Naive thymus-derived CD4-positive, alpha-beta T cell (primary cell): ENCODE measurements at regions of chr14 and their contacts with region 1.

Region 1: DNA sequence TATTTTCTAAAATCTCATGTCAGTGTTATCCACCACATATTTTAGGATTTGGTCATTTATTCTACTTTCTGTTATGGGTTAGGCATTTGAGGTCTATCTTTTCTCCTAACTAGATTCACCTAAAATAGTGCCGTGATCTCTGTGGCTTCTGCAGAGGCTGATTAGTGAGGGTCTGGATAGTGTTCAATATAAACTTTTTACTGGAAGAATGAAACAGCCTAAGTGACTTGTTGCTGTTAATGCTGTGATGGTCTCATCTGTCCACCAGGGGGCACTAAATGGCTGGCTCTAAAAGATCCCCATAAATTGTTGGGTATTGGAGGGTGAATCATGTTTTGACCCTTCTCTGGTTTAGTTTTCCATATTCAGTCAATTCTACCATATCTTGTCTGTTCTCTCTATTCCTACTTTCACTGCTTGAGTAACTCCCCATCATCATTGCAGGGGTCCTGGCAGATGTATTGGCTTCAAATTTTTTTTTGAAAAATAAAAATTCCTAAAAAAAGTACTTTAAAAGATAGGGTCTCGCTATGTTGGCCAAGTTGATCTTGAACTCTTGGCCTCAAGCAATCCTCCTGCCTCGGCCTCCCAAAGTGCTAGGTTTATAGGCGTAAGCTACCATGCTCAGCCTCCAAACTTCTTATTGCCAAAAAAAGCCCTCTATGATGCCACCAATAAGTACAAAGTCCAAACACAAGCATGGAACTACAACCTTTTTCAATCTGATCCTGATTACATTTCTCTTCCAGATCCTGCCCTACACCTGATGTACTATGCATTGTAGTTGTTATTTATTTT is 6.9 kb downstream of the PABPN1 start:
- DNase-seq: peak in 8 of 9 donors; percentile 49 to 69 (median 59)
- ATAC-seq: peak; percentile 86
- H3K4me3 ChIP-seq: no peak overlapping the region
- H3K4me3 Mint-ChIP-seq: no peak overlapping the region
- H3K27ac ChIP-seq: no peak overlapping the region
- H3K27ac Mint-ChIP-seq: peak overlapping the region in 3 of 9 donors; percentile 6 to 34 (median 23)
- H3K4me1 ChIP-seq: peaks cover 0 to under 1% of the 10 kb centered on the region in 2 donors
- H3K4me1 Mint-ChIP-seq: peaks cover 3 to 11% (median 8%) of the 10 kb centered on the region in 7 donors
- H3K27me3 ChIP-seq: no peaks in the 10 kb centered on the region
- H3K27me3 Mint-ChIP-seq: peaks cover 0 to 6% (median 0%) of the 10 kb centered on the region in 5 donors

Region 2: DNA sequence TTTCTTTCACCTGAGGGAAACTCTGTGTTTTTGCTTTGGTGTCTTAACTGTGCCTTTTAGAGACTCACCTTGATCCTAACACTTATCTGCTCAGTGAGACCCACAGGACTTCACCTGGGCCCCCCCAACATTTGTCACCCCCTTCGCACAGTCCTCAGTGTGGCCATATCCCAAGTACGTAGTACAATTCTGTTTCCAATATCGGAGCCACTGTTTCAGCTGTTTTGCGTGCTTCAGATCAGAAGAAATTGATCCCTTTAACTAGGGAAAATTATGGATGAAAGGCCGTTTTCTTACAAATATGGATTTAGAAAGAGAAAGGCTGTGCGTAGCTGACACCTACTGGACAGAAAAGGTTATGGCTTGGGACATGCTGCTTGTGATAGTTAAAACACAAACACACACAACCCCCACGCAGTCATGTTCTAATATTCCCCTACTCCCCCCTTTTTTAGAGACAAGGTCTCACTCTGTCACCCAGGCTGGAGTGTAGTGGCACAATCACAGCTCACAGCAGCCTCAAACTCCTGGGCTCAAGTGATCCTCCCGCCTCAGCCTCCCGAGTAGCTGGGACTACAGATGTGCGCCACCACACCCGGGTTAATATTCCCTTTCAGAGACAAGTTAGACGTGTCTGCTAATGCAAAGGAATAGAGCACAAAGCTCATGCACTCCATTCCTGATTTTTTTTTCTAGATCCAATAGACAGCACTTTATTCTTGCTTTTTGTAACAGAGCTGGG is 141.1 kb before region 1 on chr14:
- CTCF ChIA-PET with region 1: no interaction called
- POLR2A ChIA-PET with region 1: no interaction called
- intact Hi-C with region 1: no loop called
- DNase-seq: peak in 7 of 9 donors; percentile 25 to 55 (median 36)
- ATAC-seq: peak; percentile 73
- H3K4me3 ChIP-seq: no peak overlapping the region
- H3K4me3 Mint-ChIP-seq: no peak overlapping the region
- H3K27ac ChIP-seq: no peak overlapping the region
- H3K27ac Mint-ChIP-seq: peak overlapping the region in 3 of 9 donors; percentile 12 to 65 (median 26)
- H3K4me1 ChIP-seq: peaks cover 3 to 4% of the 10 kb centered on the region in 2 donors
- H3K4me1 Mint-ChIP-seq: peaks cover 0 to 11% (median 2%) of the 10 kb centered on the region in 7 donors
- H3K27me3 ChIP-seq: no peaks in the 10 kb centered on the region
- H3K27me3 Mint-ChIP-seq: peaks cover 0 to 19% (median 0%) of the 10 kb centered on the region in 5 donors

Region 3: GRCh38 chr14:23269193-23269592 is 59.0 kb before region 1 on chr14:
- CTCF ChIA-PET with region 1: interaction called, 7 read pairs
- POLR2A ChIA-PET with region 1: no interaction called
- intact Hi-C with region 1: loop called (anchors 1 to 2 kb)
- DNase-seq: no peak
- ATAC-seq: no peak
- H3K4me3 ChIP-seq: no peak overlapping the region
- H3K4me3 Mint-ChIP-seq: no peak overlapping the region
- H3K27ac ChIP-seq: no peak overlapping the region
- H3K27ac Mint-ChIP-seq: no peak overlapping the region
- H3K4me1 ChIP-seq: no peaks in the 10 kb centered on the region
- H3K4me1 Mint-ChIP-seq: no peaks in the 10 kb centered on the region
- H3K27me3 ChIP-seq: peaks cover 0 to 4% of the 10 kb centered on the region in 2 donors
- H3K27me3 Mint-ChIP-seq: peaks cover 0 to 18% (median 12%) of the 10 kb centered on the region in 5 donors

Region 4: GRCh38 chr14:23352511-23353432 is 24.6 kb after region 1 on chr14 and contains the start of gene SLC22A17:
- CTCF ChIA-PET with region 1: no interaction called
- POLR2A ChIA-PET with region 1: interaction called, 3 read pairs
- intact Hi-C with region 1: loop called in 1 of 2 experiments (anchors 1 kb)
- DNase-seq: peak; percentile 42 to 80 (median 67)
- ATAC-seq: peak; percentile 93
- H3K4me3 ChIP-seq: peak within 1 kb of the TSS; percentile 54
- H3K4me3 Mint-ChIP-seq: peak within 1 kb of the TSS; percentile 78 to 92 (median 88)
- H3K27ac ChIP-seq: peak within 1 kb of the TSS; percentile 58
- H3K27ac Mint-ChIP-seq: peak within 1 kb of the TSS in 8 of 9 donors; percentile 5 to 93 (median 77)
- H3K4me1 ChIP-seq: no peaks in the 10 kb centered on the region
- H3K4me1 Mint-ChIP-seq: peaks cover 10 to 25% (median 18%) of the 10 kb centered on the region in 7 donors
- H3K27me3 ChIP-seq: no peaks in the 10 kb centered on the region
- H3K27me3 Mint-ChIP-seq: peaks cover 0 to 55% (median 33%) of the 10 kb centered on the region in 5 donors
- total RNA-seq, gene SLC22A17: 1.9 to 30.0 (median 22.6) TPM